Activated naive CD8-positive, alpha-beta T cell treated with anti-CD3 and anti-CD28 coated beads, Interleukin-2, amount 10 ng/mL, durations not matched to agents 7 days and 5 days (primary cell): ENCODE measurements at regions of chr19 and their contacts with region 1.

Region 1: GRCh38 chr19:10259162-10259905 is 7.3 kb downstream of the MRPL4 start:
- DNase-seq: peak; percentile 78
- ATAC-seq: peak; percentile 70
- H3K4me3 Mint-ChIP-seq: no peak overlapping the region
- H3K27ac Mint-ChIP-seq: no peak overlapping the region
- H3K4me1 Mint-ChIP-seq: peaks cover 19% of the 10 kb centered on the region
- H3K27me3 Mint-ChIP-seq: no peaks in the 10 kb centered on the region

Region 2: GRCh38 chr19:10332955-10333757 is 73.8 kb after region 1 on chr19 and contains the start of gene RAVER1:
- POLR2A ChIA-PET with region 1: no interaction called
- DNase-seq: peak; percentile 96
- ATAC-seq: peak; percentile 96
- H3K4me3 Mint-ChIP-seq: peak within 1 kb of the TSS; percentile 96
- H3K27ac Mint-ChIP-seq: peak within 1 kb of the TSS; percentile 94
- H3K4me1 Mint-ChIP-seq: peaks cover 23% of the 10 kb centered on the region
- H3K27me3 Mint-ChIP-seq: no peaks in the 10 kb centered on the region
- total RNA-seq, gene RAVER1: 77.9 to 78.5 TPM

Region 3: DNA sequence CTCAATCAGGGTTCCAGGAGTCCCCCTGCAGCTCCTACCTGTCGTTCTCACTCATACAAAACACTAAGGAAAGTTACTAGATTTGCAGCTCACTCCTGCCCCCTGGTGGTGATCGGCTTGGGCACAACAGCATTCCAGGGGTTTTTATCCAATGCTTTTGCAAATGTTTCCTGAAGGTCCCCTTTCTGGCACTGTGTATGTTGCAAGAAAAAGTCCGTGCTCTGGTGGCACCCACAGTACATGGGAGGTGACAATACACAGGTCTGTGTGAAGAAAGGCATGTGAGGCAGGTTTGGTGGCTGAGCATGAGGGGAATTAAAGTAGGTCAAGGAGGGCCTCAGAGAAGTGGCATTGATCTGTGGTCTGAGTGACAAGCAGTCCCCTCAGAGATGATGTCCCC is 129.6 kb after region 1 on chr19:
- POLR2A ChIA-PET with region 1: interaction called, 16 read pairs
- DNase-seq: peak; percentile 78
- ATAC-seq: peak; percentile 38
- H3K4me3 Mint-ChIP-seq: no peak overlapping the region
- H3K27ac Mint-ChIP-seq: no peak overlapping the region
- H3K4me1 Mint-ChIP-seq: peaks cover 9% of the 10 kb centered on the region
- H3K27me3 Mint-ChIP-seq: no peaks in the 10 kb centered on the region